Activated CD8-positive, alpha-beta T cell treated with anti-CD3 and anti-CD28 coated beads for 36 hours (primary cell): ENCODE measurements at regions of chr15 and their contacts with region 1.

Region 1: GRCh38 chr15:79184465-79184892 is 93.9 kb upstream of the RASGRF1 start:
- DNase-seq: peak; percentile 84
- ATAC-seq: no peak
- H3K4me3 Mint-ChIP-seq: no peak overlapping the region
- H3K27ac Mint-ChIP-seq: no peak overlapping the region
- H3K4me1 Mint-ChIP-seq: no peaks in the 10 kb centered on the region
- H3K27me3 Mint-ChIP-seq: peaks cover 5% of the 10 kb centered on the region
- CTCF ChIP-seq: peak; percentile 91

Region 2: GRCh38 chr15:78790030-78790429 is 394.4 kb before region 1 on chr15:
- CTCF ChIA-PET with region 1: no interaction called
- POLR2A ChIA-PET with region 1: no interaction called
- intact Hi-C with region 1: no loop called
- DNase-seq: peak; percentile 42
- ATAC-seq: peak; percentile 92
- H3K4me3 Mint-ChIP-seq: no peak overlapping the region
- H3K27ac Mint-ChIP-seq: no peak overlapping the region
- H3K4me1 Mint-ChIP-seq: peaks cover 4% of the 10 kb centered on the region
- H3K27me3 Mint-ChIP-seq: no peaks in the 10 kb centered on the region
- CTCF ChIP-seq: no peak

Region 3: GRCh38 chr15:78909791-78910228 is 274.7 kb before region 1 on chr15:
- CTCF ChIA-PET with region 1: interaction called, 17 read pairs
- POLR2A ChIA-PET with region 1: no interaction called
- intact Hi-C with region 1: no loop called
- DNase-seq: peak; percentile 46
- ATAC-seq: peak; percentile 67
- H3K4me3 Mint-ChIP-seq: no peak overlapping the region
- H3K27ac Mint-ChIP-seq: no peak overlapping the region
- H3K4me1 Mint-ChIP-seq: peaks cover 11% of the 10 kb centered on the region
- H3K27me3 Mint-ChIP-seq: no peaks in the 10 kb centered on the region
- CTCF ChIP-seq: peak; percentile 62

Region 4: DNA sequence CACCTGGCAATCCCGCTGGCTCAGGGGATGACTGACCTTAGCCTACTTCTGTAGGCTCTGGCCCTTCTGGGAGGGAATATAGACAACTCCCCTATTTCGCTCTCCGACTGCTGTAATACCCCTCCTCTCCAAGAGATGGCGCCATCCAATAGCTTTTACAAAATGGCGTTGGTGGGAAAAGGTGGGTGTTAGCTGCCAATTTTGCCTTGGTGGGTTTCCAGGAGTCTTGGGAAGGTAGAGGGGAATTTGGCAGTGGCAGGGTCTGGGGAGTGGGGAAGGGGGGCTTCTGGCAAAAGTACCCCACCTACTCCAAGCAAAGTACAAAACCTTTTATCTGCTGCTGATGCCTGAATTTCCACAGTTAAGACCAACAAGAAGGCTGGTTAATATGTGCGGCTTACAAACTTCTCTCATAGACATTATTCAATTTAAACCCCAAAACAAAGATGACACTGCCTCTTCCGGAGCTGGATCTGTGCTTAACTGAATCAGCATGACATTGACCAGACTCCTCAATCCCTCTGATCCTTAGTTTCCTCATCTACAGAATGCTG is 156.0 kb before region 1 on chr15:
- CTCF ChIA-PET with region 1: interaction called, 170 read pairs
- POLR2A ChIA-PET with region 1: no interaction called
- intact Hi-C with region 1: loop called (anchors 1 kb)
- DNase-seq: peak; percentile 61
- ATAC-seq: peak; percentile 67
- H3K4me3 Mint-ChIP-seq: no peak overlapping the region
- H3K27ac Mint-ChIP-seq: no peak overlapping the region
- H3K4me1 Mint-ChIP-seq: no peaks in the 10 kb centered on the region
- H3K27me3 Mint-ChIP-seq: peaks cover 9% of the 10 kb centered on the region
- CTCF ChIP-seq: peak; percentile 89

Region 5: DNA sequence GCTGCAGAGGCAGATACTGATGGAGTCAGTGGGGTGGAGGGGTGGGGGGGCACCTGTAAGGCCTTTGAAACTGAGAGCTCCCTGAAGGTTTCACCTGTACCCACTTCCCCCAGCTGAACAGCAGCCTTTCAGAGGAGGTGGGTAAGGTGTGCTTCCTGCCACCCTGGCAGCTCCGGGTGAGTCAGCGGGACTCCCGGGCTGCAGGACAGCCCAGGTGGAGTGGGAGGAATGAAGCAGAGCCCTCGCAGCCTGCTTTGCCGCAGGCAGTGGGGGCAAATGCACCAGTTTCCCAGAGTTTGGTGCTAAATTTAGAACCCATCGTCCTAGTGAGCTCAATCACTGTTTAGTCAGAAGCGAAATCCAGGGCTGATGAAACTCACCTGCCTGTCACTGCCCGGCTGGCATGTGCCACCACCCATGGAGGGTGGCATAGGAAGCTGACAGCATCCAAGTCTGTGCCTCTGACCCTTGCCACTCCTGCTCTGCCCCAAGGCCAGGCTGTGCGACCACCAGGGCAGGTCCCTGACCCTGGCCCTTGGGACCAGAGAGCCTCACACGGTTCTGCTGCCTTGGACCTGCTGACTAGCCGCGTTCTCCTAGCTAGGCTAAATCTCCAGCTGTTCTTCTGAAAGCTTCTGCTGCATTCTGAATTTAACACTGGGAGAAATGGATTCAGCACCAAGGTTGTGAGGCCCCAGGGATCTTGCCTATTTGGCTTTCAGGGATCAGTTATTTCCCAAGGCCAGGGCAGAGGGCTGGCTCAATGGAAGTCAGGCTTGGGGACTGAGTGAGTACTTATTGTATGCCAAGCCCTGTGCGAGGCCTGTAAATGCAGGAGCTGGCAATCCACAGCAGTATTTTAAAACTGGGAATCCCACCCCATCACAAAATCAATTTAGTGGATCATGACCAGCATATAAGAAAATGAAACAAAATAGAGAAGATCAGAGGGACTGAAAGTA is 26.6 kb before region 1 on chr15:
- CTCF ChIA-PET with region 1: interaction called, 14 read pairs
- POLR2A ChIA-PET with region 1: no interaction called
- intact Hi-C with region 1: no loop called
- DNase-seq: no peak
- ATAC-seq: no peak
- H3K4me3 Mint-ChIP-seq: no peak overlapping the region
- H3K27ac Mint-ChIP-seq: no peak overlapping the region
- H3K4me1 Mint-ChIP-seq: no peaks in the 10 kb centered on the region
- H3K27me3 Mint-ChIP-seq: peaks cover 14% of the 10 kb centered on the region
- CTCF ChIP-seq: no peak

Region 6: DNA sequence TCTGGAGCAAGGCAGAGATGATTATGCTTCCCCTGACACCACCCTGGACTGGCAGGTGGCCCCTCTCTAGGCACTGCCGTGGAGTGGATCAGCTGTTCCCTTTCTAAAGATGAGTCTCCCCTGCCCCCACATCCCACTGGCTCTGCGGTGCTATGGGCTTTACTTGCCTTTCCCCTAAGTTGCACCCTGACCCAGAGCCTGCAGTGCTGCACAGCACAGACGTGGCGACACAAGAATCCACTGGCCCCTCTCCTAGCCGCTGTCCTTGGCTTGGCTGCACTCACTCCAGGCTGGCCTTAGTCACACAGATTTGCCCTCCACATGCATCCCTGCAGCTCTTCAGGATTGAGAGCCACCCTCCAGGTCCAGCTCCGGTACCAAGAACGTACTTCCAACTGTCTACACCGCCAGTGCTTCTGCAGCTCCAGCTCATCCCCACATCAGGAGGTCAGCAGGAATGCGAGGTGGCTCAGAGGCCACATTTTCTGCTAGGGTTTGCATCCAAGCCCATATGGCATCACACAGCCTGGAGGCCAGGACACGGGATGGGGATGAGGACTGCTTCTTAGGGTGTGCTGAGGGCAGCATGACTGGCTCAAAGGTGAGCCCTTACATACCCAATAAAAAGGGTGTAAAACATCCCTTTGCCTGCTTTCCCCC is 11.5 kb before region 1 on chr15:
- CTCF ChIA-PET with region 1: interaction called, 30 read pairs
- POLR2A ChIA-PET with region 1: no interaction called
- intact Hi-C with region 1: no loop called
- DNase-seq: no peak
- ATAC-seq: no peak
- H3K4me3 Mint-ChIP-seq: no peak overlapping the region
- H3K27ac Mint-ChIP-seq: no peak overlapping the region
- H3K4me1 Mint-ChIP-seq: no peaks in the 10 kb centered on the region
- H3K27me3 Mint-ChIP-seq: peaks cover 16% of the 10 kb centered on the region
- CTCF ChIP-seq: no peak

Region 7: GRCh38 chr15:79204886-79205675 is 20.6 kb after region 1 on chr15:
- CTCF ChIA-PET with region 1: interaction called, 13 read pairs
- POLR2A ChIA-PET with region 1: no interaction called
- intact Hi-C with region 1: no loop called
- DNase-seq: no peak
- ATAC-seq: no peak
- H3K4me3 Mint-ChIP-seq: no peak overlapping the region
- H3K27ac Mint-ChIP-seq: no peak overlapping the region
- H3K4me1 Mint-ChIP-seq: no peaks in the 10 kb centered on the region
- H3K27me3 Mint-ChIP-seq: peaks cover 23% of the 10 kb centered on the region
- CTCF ChIP-seq: no peak

Region 8: DNA sequence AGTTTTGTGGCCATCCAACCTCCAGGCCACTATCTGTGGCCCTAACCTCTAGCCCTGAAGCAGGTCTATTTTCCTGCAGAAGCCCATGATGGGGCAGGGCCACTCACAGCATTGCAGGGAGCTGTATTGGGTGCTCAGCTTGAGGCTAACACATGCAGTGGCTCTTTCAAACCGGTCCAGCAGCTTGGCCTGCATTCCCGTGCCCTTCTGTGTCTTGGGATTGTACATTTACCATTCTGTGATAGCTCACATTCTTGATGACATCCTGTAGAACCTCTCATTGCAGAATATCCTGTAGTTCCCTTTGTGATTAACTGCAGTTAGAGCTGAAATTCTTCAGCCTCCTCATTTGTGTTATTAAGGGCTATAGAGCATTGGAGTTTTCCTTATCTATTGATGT is 37.2 kb after region 1 on chr15:
- CTCF ChIA-PET with region 1: interaction called, 10 read pairs
- POLR2A ChIA-PET with region 1: no interaction called
- intact Hi-C with region 1: no loop called
- DNase-seq: no peak
- ATAC-seq: no peak
- H3K4me3 Mint-ChIP-seq: no peak overlapping the region
- H3K27ac Mint-ChIP-seq: no peak overlapping the region
- H3K4me1 Mint-ChIP-seq: no peaks in the 10 kb centered on the region
- H3K27me3 Mint-ChIP-seq: peaks cover 24% of the 10 kb centered on the region
- CTCF ChIP-seq: no peak

Region 9: GRCh38 chr15:79673416-79674123 is 489.1 kb after region 1 on chr15:
- CTCF ChIA-PET with region 1: no interaction called
- POLR2A ChIA-PET with region 1: no interaction called
- intact Hi-C with region 1: no loop called
- DNase-seq: peak; percentile 45
- ATAC-seq: peak; percentile 55
- H3K4me3 Mint-ChIP-seq: no peak overlapping the region
- H3K27ac Mint-ChIP-seq: peak overlapping the region; percentile 33
- H3K4me1 Mint-ChIP-seq: peaks cover 4% of the 10 kb centered on the region
- H3K27me3 Mint-ChIP-seq: peaks cover 33% of the 10 kb centered on the region
- CTCF ChIP-seq: no peak